ENCODE measurements at regions of chrX and their contacts with region 1.

Region 1: DNA sequence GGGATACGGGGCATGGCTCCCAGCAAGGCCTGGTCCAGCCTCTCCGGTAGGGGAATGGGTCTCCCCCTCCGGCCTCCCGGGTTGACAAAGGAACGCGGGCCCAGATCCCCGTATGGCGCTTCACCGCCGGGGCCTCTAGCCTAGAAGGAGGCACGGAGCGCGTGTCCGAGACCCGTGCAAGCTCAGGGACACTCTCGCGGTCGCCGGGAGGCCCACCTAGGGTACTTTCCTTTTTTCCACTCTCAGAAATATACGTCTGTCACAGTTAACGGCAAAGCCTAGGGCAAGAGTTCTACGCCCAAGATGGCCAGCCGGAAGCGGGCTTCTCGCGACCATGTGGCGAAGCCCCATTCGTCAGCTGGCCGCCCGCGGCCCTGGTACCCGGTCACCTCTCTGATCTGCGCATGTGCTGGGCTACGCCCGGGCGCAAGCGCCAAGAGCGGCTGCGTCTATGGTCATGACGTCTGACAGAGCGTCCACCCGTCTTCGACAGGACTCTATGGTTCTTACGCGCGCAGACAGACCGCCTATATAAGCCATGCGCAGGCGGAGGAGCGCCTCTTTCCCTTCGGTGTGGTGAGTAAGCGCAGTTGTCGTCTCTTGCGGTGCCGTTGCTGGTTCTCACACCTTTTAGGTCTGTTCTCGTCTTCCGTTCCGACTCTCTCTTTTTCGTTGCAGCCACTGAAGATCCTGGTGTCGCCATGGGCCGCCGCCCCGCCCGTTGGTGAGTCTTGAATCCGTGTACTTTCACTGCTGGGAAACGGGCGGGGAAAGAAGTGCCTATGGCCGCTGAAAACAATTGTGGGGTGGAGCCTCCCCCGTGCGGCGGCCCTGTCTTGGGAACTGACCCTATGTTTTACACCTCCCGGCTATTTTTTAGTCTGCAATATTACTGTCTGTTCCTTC is at the start of gene RPL10:
- DNase-seq: peak; percentile 91
- H3K4me3 Mint-ChIP-seq: peak within 1 kb of the TSS; percentile 94
- H3K27ac Mint-ChIP-seq: peak within 1 kb of the TSS; percentile 100
- H3K4me1 Mint-ChIP-seq: peaks cover 11% of the 10 kb centered on the region
- H3K27me3 Mint-ChIP-seq: no peaks in the 10 kb centered on the region
- total RNA-seq, gene RPL10: 3,331 to 3,466 TPM

Region 2: DNA sequence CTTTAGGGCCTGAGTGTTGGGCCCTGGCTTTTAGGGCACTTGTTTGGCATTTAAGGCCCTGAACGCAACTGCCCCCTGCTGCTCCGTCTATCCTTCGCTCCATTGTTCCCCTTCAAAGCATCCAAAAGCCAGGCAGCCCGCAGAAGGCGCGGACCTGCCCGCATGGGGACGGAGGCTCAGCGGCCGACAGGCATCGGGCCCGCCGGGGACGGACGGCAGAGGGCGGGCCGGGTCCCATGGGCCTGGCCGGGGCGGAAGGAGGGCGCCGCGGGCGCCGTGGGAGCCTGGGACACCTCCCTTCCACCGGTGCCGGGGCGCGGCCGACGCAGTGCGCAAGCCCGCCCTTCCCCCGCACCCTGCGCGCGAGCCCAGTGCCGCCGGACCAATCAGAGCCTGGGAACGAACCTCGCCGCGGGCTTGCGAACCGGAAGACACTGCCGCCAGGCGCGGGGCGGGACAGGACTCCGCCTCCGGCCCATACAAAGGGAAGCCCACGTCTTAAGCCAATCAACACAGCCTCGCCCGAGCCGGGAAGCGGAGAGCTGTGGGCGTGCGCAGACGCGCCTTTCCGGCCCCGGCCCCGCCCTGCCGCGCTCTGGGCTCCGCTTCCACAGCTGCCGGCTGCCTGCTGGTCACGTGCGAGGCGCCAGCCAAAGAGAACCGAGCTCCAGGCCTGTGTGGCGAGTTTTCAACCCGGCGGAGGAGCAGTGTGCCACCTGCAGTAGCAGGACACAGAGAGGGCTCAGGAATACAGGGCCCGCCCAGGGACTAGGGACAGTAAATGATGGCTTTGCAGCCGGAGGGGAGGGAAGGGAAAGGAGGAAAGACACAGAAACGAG is 469.9 kb before region 1 on chrX:
- CTCF ChIA-PET with region 1: no interaction called
- intact Hi-C with region 1: loop called (anchors 5 kb)
- DNase-seq: peak; percentile 93
- H3K4me3 Mint-ChIP-seq: peak overlapping the region; percentile 88
- H3K27ac Mint-ChIP-seq: peak overlapping the region; percentile 98
- H3K4me1 Mint-ChIP-seq: peaks cover 28% of the 10 kb centered on the region
- H3K27me3 Mint-ChIP-seq: no peaks in the 10 kb centered on the region

Region 3: DNA sequence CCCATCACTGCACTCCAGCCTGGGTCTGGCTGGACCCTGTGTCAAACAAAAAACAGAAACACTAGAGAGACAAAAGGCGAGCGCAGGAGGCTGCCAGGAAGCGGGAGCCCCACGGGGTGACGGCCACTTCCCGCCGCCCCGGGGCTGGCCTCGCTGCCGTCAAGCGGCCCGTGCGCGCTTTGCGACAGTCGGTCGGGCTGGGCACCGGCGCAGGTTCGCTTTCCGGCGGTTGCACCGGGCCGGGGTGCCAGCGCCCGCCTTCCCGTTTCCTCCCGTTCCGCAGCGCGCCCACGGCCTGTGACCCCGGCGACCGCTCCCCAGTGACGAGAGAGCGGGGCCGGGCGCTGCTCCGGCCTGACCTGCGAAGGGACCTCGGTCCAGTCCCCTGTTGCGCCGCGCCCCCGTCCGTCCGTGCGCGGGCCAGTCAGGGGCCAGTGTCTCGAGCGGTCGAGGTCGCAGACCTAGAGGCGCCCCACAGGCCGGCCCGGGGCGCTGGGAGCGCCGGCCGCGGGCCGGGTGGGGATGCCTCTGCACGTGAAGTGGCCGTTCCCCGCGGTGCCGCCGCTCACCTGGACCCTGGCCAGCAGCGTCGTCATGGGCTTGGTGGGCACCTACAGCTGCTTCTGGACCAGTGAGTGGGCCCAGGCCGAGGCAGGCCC is 13.4 kb after region 1 on chrX and contains the start of gene TAFAZZIN:
- CTCF ChIA-PET with region 1: interaction called, 17 read pairs
- intact Hi-C with region 1: loop called (anchors 1 kb)
- DNase-seq: peak; percentile 82
- H3K4me3 Mint-ChIP-seq: peak within 1 kb of the TSS; percentile 91
- H3K27ac Mint-ChIP-seq: peak within 1 kb of the TSS; percentile 94
- H3K4me1 Mint-ChIP-seq: peaks cover 13% of the 10 kb centered on the region
- H3K27me3 Mint-ChIP-seq: no peaks in the 10 kb centered on the region
- total RNA-seq, gene TAFAZZIN: 63.7 to 66.5 TPM

Region 4: DNA sequence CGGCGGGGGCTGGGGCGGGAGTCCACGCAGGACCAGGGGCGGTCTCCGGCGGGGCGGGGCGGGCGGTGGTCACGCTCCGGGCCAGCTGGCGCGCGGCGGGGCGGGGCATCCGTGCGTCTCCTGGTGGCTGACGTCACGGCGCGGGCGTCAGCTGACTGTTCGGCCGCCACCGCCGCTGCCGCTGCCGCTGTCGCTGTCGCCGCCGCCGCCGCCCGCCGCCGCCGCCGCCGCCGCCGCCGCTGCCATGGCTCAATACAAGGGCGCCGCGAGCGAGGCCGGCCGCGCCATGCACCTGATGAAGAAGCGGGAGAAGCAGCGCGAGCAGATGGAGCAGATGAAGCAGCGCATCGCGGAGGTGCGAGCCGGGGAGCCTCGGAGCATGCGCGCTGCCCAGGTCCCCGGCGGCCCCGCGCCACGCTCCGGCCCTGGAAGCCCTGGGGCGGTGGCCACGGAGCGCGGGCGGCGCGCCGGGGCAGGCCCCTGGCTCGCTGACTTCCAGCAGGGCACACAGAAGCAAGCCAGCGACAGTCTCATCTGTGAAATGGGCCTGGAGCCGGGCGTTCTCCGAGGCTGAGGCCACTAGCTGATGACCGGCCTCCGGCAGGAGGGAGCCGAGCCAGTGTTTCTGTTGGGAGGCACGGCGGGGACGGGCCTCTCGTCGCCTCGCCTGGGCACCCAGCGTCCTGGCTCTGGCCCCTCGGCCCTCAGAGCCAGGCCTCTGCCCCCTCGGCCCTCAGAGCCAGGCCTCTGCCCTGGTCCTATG is 46.1 kb after region 1 on chrX and contains the start of gene FAM50A:
- CTCF ChIA-PET with region 1: no interaction called
- intact Hi-C with region 1: loop called (anchors 5 kb)
- DNase-seq: peak; percentile 65
- H3K4me3 Mint-ChIP-seq: peak within 1 kb of the TSS; percentile 67
- H3K27ac Mint-ChIP-seq: peak within 1 kb of the TSS; percentile 30
- H3K4me1 Mint-ChIP-seq: peaks cover 9% of the 10 kb centered on the region
- H3K27me3 Mint-ChIP-seq: no peaks in the 10 kb centered on the region
- total RNA-seq, gene FAM50A: 39.7 to 43.7 TPM

Region 5: GRCh38 chrX:154490414-154491083 is 92.5 kb after region 1 on chrX and contains the start of gene SLC10A3:
- CTCF ChIA-PET with region 1: interaction called, 8 read pairs
- intact Hi-C with region 1: loop called (anchors 1 kb)
- DNase-seq: peak; percentile 92
- H3K4me3 Mint-ChIP-seq: peak within 1 kb of the TSS; percentile 86
- H3K27ac Mint-ChIP-seq: peak within 1 kb of the TSS; percentile 88
- H3K4me1 Mint-ChIP-seq: peaks cover 20% of the 10 kb centered on the region
- H3K27me3 Mint-ChIP-seq: no peaks in the 10 kb centered on the region
- total RNA-seq, gene SLC10A3: 6.7 to 6.9 TPM